Naive thymus-derived CD4-positive, alpha-beta T cell (primary cell): ENCODE measurements at regions of chr11 and their contacts with region 1.

Region 1: GRCh38 chr11:9757809-9758636 is 94.1 kb downstream of the SWAP70 start:
- DNase-seq: peak; percentile 79 to 97 (median 90)
- ATAC-seq: peak; percentile 94
- H3K4me3 ChIP-seq: peak overlapping the region; percentile 91
- H3K4me3 Mint-ChIP-seq: peak overlapping the region; percentile 77 to 86 (median 84)
- H3K27ac ChIP-seq: peak overlapping the region; percentile 73
- H3K27ac Mint-ChIP-seq: peak overlapping the region; percentile 34 to 91 (median 81)
- H3K4me1 ChIP-seq: peaks cover 7 to 9% of the 10 kb centered on the region in 2 donors
- H3K4me1 Mint-ChIP-seq: peaks cover 12 to 39% (median 18%) of the 10 kb centered on the region in 7 donors
- H3K27me3 ChIP-seq: no peaks in the 10 kb centered on the region
- H3K27me3 Mint-ChIP-seq: no peaks in the 10 kb centered on the region

Region 2: DNA sequence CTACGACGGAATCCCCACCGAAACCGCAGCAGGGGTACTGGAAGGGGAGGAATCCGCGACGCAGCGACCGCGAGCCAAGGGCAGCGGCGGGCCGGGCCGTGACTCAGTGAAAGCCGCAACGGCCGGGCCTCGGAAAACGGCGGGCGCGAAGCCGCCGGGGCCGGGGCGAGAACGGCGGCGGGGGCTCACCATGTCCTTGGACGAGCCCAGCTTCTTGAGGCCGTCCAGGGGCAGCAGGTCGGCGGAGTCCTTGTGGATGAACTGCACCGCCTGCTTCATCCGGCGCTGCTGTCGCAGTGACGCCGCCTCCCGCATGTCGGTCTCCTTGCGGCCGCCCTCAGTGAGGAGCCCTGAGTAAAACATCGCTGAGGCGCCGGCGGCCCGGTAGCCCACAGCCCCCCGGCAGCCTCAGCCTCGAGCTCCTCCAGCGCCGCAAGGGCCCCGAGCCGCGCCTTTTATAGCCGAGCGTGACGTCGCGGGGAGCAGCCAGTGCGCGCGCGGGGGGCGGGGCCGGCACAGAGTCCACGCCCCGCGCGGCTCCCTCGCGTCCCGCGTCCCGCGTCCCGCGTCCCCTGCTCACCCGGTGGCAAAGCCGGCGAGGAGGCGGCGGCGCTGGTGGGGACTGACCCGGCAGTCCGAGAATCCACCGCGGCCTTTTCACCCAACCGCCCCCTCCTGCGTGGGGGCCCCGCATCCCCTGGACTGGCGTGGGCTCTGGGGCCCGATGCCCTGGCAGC is 754.3 kb before region 1 on chr11 and contains the start of gene NRIP3:
- CTCF ChIA-PET with region 1: no interaction called
- POLR2A ChIA-PET with region 1: no interaction called
- intact Hi-C with region 1: loop called in 1 of 2 experiments (anchors 10 kb)
- DNase-seq: peak; percentile 72 to 86 (median 80)
- ATAC-seq: peak; percentile 89
- H3K4me3 ChIP-seq: peak within 1 kb of the TSS; percentile 32
- H3K4me3 Mint-ChIP-seq: peak within 1 kb of the TSS; percentile 81 to 90 (median 86)
- H3K27ac ChIP-seq: no peak within 1 kb of the TSS
- H3K27ac Mint-ChIP-seq: peak within 1 kb of the TSS; percentile 12 to 87 (median 62)
- H3K4me1 ChIP-seq: peaks cover 8 to 12% of the 10 kb centered on the region in 2 donors
- H3K4me1 Mint-ChIP-seq: peaks cover 13 to 31% (median 20%) of the 10 kb centered on the region in 7 donors
- H3K27me3 ChIP-seq: peaks cover 3 to 8% of the 10 kb centered on the region in 2 donors
- H3K27me3 Mint-ChIP-seq: peaks cover 30 to 56% (median 41%) of the 10 kb centered on the region in 5 donors
- total RNA-seq, gene NRIP3: 0.59 to 11.0 (median 3.4) TPM

Region 3: GRCh38 chr11:9774591-9775397 is 16.8 kb after region 1 on chr11:
- CTCF ChIA-PET with region 1: no interaction called
- POLR2A ChIA-PET with region 1: no interaction called
- intact Hi-C with region 1: no loop called
- DNase-seq: no peak
- ATAC-seq: no peak
- H3K4me3 ChIP-seq: no peak overlapping the region
- H3K4me3 Mint-ChIP-seq: no peak overlapping the region
- H3K27ac ChIP-seq: no peak overlapping the region
- H3K27ac Mint-ChIP-seq: peak overlapping the region in 1 of 9 donors; percentile 56
- H3K4me1 ChIP-seq: no peaks in the 10 kb centered on the region
- H3K4me1 Mint-ChIP-seq: peaks cover 0 to 2% (median 0%) of the 10 kb centered on the region in 7 donors
- H3K27me3 ChIP-seq: no peaks in the 10 kb centered on the region
- H3K27me3 Mint-ChIP-seq: no peaks in the 10 kb centered on the region

Region 4: DNA sequence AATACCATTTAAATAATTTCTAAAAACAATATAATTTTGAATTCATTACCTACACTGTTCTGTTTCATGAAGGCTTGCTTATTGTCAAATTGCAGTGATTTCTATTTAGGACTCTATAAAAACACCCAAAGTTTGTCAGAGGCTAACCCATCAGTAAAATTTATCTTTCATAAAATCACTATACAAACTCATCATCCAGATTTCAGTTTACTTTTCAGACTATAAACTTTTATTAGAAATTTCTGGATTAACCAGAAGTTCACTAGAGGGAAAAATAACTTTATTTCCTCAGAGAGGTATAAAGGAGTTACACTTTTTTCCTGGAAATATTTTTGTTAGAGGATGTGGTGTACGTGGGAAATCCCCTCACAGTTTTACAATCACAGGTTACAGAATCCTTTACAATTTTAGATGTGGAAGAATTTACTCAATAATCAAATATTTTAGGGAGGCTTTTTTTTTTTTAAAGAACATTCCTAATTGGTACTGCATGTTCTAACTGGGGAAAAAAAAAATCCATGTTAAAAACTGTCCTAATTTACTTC is 82.5 kb after region 1 on chr11:
- CTCF ChIA-PET with region 1: no interaction called
- POLR2A ChIA-PET with region 1: no interaction called
- intact Hi-C with region 1: loop called in 1 of 2 experiments (anchors 2 kb)
- DNase-seq: peak in 2 of 9 donors; percentile 9 to 25
- ATAC-seq: peak; percentile 38
- H3K4me3 ChIP-seq: no peak overlapping the region
- H3K4me3 Mint-ChIP-seq: peak overlapping the region in 8 of 10 donors; percentile 33 to 67 (median 55)
- H3K27ac ChIP-seq: no peak overlapping the region
- H3K27ac Mint-ChIP-seq: peak overlapping the region in 8 of 9 donors; percentile 65 to 80 (median 72)
- H3K4me1 ChIP-seq: peaks cover 5 to 17% of the 10 kb centered on the region in 2 donors
- H3K4me1 Mint-ChIP-seq: peaks cover 19 to 50% (median 38%) of the 10 kb centered on the region in 7 donors
- H3K27me3 ChIP-seq: no peaks in the 10 kb centered on the region
- H3K27me3 Mint-ChIP-seq: peaks cover 0 to 2% (median 0%) of the 10 kb centered on the region in 5 donors

Region 5: GRCh38 chr11:9972989-9973388 is 215.0 kb after region 1 on chr11:
- CTCF ChIA-PET with region 1: interaction called, 6 read pairs
- POLR2A ChIA-PET with region 1: no interaction called
- intact Hi-C with region 1: loop called in 1 of 2 experiments (anchors 1 kb)
- DNase-seq: peak in 5 of 9 donors; percentile 10 to 42 (median 24)
- ATAC-seq: peak; percentile 72
- H3K4me3 ChIP-seq: no peak overlapping the region
- H3K4me3 Mint-ChIP-seq: no peak overlapping the region
- H3K27ac ChIP-seq: no peak overlapping the region
- H3K27ac Mint-ChIP-seq: no peak overlapping the region
- H3K4me1 ChIP-seq: no peaks in the 10 kb centered on the region
- H3K4me1 Mint-ChIP-seq: peaks cover 0 to 2% (median 0%) of the 10 kb centered on the region in 7 donors
- H3K27me3 ChIP-seq: no peaks in the 10 kb centered on the region
- H3K27me3 Mint-ChIP-seq: no peaks in the 10 kb centered on the region

Region 6: DNA sequence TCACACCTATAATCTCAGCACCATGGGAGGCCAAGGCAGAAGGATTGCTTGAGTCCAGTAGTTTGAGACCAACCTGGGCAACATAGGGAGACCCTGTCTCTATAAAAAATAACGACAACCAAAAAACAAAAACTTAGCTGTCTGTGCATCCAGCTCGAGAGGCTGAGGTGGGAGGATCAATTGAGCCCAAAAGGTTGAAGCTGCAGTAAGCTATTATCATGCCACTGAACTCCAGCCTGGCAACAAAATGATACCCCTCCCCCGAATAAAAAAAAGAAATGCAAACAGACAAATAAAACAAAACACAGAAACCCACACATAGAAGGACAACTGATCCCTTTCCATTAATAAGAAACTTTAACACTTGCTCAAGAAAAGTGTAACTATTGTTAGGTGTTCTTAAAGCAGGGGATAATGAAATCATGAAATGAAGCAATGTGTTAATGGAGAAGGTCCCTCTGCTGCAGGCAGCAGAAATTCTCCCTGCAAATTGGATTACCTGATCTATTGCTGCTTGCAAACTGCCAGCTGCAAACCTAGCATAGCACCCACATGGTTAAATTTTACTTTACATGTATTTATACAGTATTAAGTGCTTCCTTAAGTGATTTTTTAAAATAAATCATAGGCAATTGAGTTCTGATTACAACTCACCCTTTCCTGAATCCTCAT is 309.7 kb after region 1 on chr11:
- CTCF ChIA-PET with region 1: no interaction called
- POLR2A ChIA-PET with region 1: no interaction called
- intact Hi-C with region 1: no loop called
- DNase-seq: no peak
- ATAC-seq: no peak
- H3K4me3 ChIP-seq: no peak overlapping the region
- H3K4me3 Mint-ChIP-seq: no peak overlapping the region
- H3K27ac ChIP-seq: no peak overlapping the region
- H3K27ac Mint-ChIP-seq: no peak overlapping the region
- H3K4me1 ChIP-seq: no peaks in the 10 kb centered on the region
- H3K4me1 Mint-ChIP-seq: no peaks in the 10 kb centered on the region
- H3K27me3 ChIP-seq: no peaks in the 10 kb centered on the region
- H3K27me3 Mint-ChIP-seq: no peaks in the 10 kb centered on the region

Region 7: GRCh38 chr11:10208131-10208575 is 450.1 kb after region 1 on chr11:
- CTCF ChIA-PET with region 1: interaction called, 4 read pairs
- POLR2A ChIA-PET with region 1: no interaction called
- intact Hi-C with region 1: loop called (anchors 1 to 2 kb)
- DNase-seq: peak in 7 of 9 donors; percentile 10 to 55 (median 44)
- ATAC-seq: peak; percentile 82
- H3K4me3 ChIP-seq: no peak overlapping the region
- H3K4me3 Mint-ChIP-seq: no peak overlapping the region
- H3K27ac ChIP-seq: no peak overlapping the region
- H3K27ac Mint-ChIP-seq: no peak overlapping the region
- H3K4me1 ChIP-seq: no peaks in the 10 kb centered on the region
- H3K4me1 Mint-ChIP-seq: no peaks in the 10 kb centered on the region
- H3K27me3 ChIP-seq: no peaks in the 10 kb centered on the region
- H3K27me3 Mint-ChIP-seq: peaks cover 0 to 16% (median 0%) of the 10 kb centered on the region in 5 donors

Region 8: DNA sequence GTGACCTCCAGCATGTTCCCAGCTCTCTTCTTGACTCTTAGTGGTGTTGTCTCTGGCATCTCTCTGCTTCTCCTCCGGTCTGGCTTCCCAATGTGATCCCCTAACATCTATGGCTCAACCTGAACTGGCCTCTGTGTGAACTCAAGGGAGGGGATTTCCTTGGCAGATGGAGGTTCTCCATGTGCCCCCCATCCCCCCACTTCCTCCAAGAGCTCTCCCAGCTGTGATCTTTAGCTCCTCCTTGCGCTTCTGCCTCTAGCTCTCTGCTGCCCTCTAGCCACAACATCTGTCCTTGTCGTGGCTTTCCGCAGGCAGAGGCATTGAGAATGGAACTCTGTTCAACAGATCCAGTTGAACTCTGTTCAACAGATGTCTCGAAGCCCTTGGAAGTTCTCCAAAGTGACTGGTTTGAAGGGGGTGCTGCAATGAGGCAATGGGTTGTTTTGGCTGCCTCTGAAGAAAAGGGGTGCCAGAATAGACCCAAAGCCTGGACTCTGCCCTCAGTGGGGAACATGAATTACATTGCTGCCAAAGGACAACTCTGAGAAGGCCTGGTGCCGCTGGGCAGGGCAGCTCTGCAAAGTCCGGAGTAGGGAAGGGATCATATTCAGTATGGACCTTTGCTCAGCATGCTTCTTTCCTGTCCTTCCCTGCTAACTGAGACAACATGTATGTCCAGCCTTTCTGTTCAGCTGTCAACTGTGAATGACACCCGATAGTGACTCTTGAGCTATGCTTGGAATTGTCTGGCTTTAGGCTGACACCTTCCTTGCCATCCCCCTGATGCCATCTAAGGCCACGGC is 608.7 kb after region 1 on chr11:
- CTCF ChIA-PET with region 1: no interaction called
- POLR2A ChIA-PET with region 1: no interaction called
- intact Hi-C with region 1: loop called in 1 of 2 experiments (anchors 1 kb)
- DNase-seq: peak; percentile 7 to 57 (median 44)
- ATAC-seq: peak; percentile 94
- H3K4me3 ChIP-seq: no peak overlapping the region
- H3K4me3 Mint-ChIP-seq: peak overlapping the region in 3 of 10 donors; percentile 5 to 41 (median 36)
- H3K27ac ChIP-seq: no peak overlapping the region
- H3K27ac Mint-ChIP-seq: peak overlapping the region in 2 of 9 donors; percentile 0 to 7
- H3K4me1 ChIP-seq: no peaks in the 10 kb centered on the region
- H3K4me1 Mint-ChIP-seq: peaks cover 4 to 13% (median 8%) of the 10 kb centered on the region in 7 donors
- H3K27me3 ChIP-seq: no peaks in the 10 kb centered on the region
- H3K27me3 Mint-ChIP-seq: peaks cover 9 to 19% (median 15%) of the 10 kb centered on the region in 5 donors